Spleen (tissue), 13 donors: ENCODE measurements at regions of chr12 and their contacts with region 1.

Region 1: GRCh38 chr12:22544038-22544979 is at the start of gene C2CD5:
- DNase-seq: peak; percentile 98
- H3K4me3 ChIP-seq: peak within 1 kb of the TSS; percentile 57 to 98 (median 82)
- H3K27ac ChIP-seq: peak within 1 kb of the TSS; percentile 87 to 98 (median 96)
- H3K4me1 ChIP-seq: peaks cover 15 to 52% (median 38%) of the 10 kb centered on the region in 6 donors
- H3K27me3 ChIP-seq: no peaks in the 10 kb centered on the region
- CTCF ChIP-seq: peak in 6 of 11 experiments; percentile 36 to 56 (median 52)
- POLR2A ChIP-seq: peak in 2 of 3 donors; percentile 69 to 89
- total RNA-seq, gene C2CD5: 35.5 to 76.3 (median 57.5) TPM

Region 2: DNA sequence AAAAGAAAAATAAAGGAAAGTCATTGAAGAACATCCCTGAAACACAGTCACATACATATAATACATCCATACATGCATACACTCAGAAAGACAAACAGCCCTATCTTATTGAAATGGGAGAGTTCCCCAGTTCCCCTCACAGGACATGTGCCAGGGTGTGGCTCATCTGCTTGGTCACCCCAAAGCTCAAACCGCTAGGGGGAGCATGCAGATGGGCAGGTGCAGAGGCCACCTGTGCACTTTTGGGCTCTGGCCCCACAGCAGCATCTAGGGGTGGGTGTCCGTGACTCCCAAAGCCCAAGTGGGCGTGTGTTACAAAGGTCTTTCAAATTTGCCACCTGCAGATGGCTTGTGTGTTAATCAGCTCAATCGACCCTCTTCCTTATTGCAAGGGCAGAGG is 423.1 kb before region 1 on chr12:
- intact Hi-C with region 1: no loop called
- DNase-seq: no peak
- H3K4me3 ChIP-seq: no peak overlapping the region
- H3K27ac ChIP-seq: no peak overlapping the region
- H3K4me1 ChIP-seq: no peaks in the 10 kb centered on the region
- H3K27me3 ChIP-seq: peaks cover 0 to 6% (median 0%) of the 10 kb centered on the region in 7 donors
- CTCF ChIP-seq: peak in 6 of 11 experiments; percentile 6 to 44 (median 27)
- POLR2A ChIP-seq: no peak

Region 3: GRCh38 chr12:22491034-22491433 is 53.3 kb before region 1 on chr12:
- intact Hi-C with region 1: no loop called
- DNase-seq: no peak
- H3K4me3 ChIP-seq: no peak overlapping the region
- H3K27ac ChIP-seq: no peak overlapping the region
- H3K4me1 ChIP-seq: no peaks in the 10 kb centered on the region
- H3K27me3 ChIP-seq: no peaks in the 10 kb centered on the region
- CTCF ChIP-seq: no peak
- POLR2A ChIP-seq: no peak

Region 4: DNA sequence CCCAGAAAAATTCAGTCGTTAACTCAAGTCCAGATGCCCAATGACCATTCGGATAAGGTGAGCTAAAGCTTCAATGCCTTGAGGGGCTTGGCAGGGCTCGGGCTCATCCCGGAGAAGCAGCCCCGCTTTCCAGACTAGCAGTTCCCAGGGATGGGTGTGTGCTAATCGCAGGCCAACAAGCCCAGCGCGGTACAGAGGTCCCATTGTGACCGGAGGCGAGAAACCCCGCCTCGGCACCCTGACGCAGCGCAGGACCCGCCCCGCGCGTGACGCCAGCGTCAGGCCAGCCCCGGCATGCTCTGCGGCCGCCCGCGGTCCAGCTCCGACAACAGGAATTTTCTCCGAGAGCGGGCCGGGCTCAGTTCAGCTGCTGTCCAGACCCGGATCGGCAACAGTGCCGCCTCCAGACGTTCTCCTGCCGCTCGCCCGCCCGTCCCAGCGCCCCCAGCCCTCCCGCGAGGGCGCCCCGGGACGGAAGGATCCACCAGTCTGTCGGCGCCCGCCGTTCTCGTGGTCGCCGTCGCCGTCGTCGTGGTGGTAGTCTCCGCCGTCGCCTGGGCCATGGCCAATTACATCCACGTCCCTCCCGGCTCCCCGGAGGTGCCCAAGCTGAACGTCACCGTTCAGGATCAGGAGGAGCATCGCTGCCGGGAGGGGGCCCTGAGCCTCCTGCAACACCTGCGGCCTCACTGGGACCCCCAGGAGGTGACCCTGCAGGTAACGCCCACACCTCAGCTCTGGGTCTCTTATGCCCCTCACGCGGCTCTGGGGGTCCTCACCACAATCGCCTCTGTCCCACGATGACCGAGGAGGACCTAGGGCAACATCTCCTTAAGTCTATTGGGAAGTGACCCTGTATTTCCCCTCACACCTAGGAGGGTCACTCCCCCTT is 80.8 kb after region 1 on chr12 and contains the start of gene ETNK1:
- intact Hi-C with region 1: loop called (anchors 5 kb)
- DNase-seq: peak; percentile 98
- H3K4me3 ChIP-seq: peak within 1 kb of the TSS; percentile 48 to 84 (median 68)
- H3K27ac ChIP-seq: peak within 1 kb of the TSS; percentile 91 to 99 (median 97)
- H3K4me1 ChIP-seq: peaks cover 24 to 51% (median 42%) of the 10 kb centered on the region in 6 donors
- H3K27me3 ChIP-seq: peaks cover 0 to 5% (median 0%) of the 10 kb centered on the region in 7 donors
- CTCF ChIP-seq: no peak
- POLR2A ChIP-seq: peak; percentile 74 to 90 (median 87)
- total RNA-seq, gene ETNK1: 51.4 to 96.7 (median 82.6) TPM